ENCODE measurements at regions of chr4 and their contacts with region 1.

Region 1: DNA sequence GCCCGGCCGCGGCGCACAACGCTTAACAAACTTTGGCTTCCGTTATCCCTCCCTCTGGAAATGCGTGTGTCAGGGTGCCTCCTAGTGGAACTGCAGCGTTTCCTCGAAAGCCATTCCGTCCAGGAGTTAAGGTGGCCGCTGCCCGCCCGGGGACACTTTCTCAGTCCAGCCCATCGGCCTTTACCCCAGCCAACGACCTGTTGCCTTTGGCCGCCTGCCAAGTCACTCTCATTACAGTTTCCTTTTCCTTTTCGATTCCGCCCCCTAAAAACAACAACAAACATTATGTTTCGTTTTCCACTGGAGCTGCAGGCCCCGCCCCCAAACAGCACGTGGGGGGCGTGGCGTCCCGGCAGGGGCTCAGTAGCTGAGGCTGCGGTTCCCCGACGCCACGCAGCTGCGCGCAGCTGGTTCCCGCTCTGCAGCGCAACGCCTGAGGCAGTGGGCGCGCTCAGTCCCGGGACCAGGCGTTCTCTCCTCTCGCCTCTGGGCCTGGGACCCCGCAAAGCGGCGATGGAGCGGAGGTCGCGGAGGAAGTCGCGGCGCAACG is at the start of gene HERC5:
- DNase-seq: peak; percentile 92 to 96
- ATAC-seq: peak; percentile 91 to 98 (median 94)
- H3K4me3 ChIP-seq: peak within 1 kb of the TSS; percentile 95
- H3K4me3 Mint-ChIP-seq: peak within 1 kb of the TSS; percentile 100
- H3K27ac ChIP-seq: peak within 1 kb of the TSS; percentile 81
- H3K27ac Mint-ChIP-seq: peak within 1 kb of the TSS; percentile 95 to 97
- H3K4me1 ChIP-seq: peaks cover 11% of the 10 kb centered on the region
- H3K4me1 Mint-ChIP-seq: peaks cover 24 to 26% of the 10 kb centered on the region in 2 donors
- H3K27me3 ChIP-seq: no peaks in the 10 kb centered on the region
- H3K27me3 Mint-ChIP-seq: no peaks in the 10 kb centered on the region
- CTCF ChIP-seq: no peak
- total RNA-seq, gene HERC5: 11.0 to 19.4 (median 17.9) TPM

Region 2: DNA sequence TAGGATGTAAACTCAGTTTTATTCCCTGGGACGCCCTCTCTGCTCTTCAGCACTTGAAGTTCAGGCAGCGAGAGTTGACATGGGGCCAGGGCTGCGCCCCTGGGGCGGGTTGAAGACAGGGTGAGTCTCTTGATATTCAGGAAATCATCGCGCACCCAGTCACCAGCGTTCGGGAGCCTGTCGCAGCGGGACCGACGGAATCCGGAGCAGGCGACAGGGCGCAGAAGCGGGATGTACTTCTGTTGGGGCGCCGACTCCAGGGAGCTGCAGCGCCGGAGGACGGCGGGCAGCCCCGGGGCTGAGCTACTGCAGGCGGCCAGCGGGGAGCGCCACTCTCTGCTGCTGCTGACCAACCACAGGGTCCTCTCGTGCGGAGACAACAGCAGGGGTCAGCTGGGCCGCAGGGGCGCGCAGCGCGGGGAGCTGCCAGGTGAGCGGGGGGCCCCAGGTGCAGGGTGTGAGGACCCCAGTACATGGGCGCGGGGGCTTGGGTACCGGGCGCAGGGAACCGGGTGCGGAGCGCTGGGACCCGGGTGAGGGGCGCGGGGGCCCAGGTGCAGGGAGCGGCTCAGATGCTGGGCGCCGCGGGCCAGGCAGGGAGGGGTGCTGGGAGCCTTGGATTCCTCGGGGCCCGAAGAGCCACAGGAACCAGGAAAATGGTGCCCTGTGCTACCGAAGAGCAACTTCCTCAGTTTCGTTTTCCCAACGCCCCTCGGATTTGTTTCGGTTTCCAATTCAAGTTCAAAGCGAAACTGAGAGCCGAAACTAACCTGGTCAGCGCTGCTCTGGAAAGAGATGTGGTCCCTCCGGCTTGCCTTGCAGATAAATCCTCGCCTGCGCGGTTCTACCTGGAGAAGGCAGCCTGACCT is 77.9 kb before region 1 on chr4 and contains the start of gene HERC6:
- intact Hi-C with region 1: loop called (anchors 1 kb)
- DNase-seq: peak; percentile 64 to 92
- ATAC-seq: peak; percentile 81 to 88 (median 83)
- H3K4me3 ChIP-seq: peak within 1 kb of the TSS; percentile 87
- H3K4me3 Mint-ChIP-seq: peak within 1 kb of the TSS; percentile 96
- H3K27ac ChIP-seq: peak within 1 kb of the TSS; percentile 89
- H3K27ac Mint-ChIP-seq: peak within 1 kb of the TSS; percentile 92 to 97
- H3K4me1 ChIP-seq: peaks cover 8% of the 10 kb centered on the region
- H3K4me1 Mint-ChIP-seq: peaks cover 16 to 21% of the 10 kb centered on the region in 2 donors
- H3K27me3 ChIP-seq: no peaks in the 10 kb centered on the region
- H3K27me3 Mint-ChIP-seq: no peaks in the 10 kb centered on the region
- CTCF ChIP-seq: peak; percentile 76
- total RNA-seq, gene HERC6: 8.3 to 18.0 (median 17.5) TPM

Region 3: GRCh38 chr4:88591787-88592599 is 135.2 kb after region 1 on chr4 and contains the start of gene HERC3:
- intact Hi-C with region 1: loop called (anchors 5 kb)
- DNase-seq: peak; percentile 91 to 93
- ATAC-seq: peak; percentile 85 to 97 (median 91)
- H3K4me3 ChIP-seq: peak within 1 kb of the TSS; percentile 100
- H3K4me3 Mint-ChIP-seq: peak within 1 kb of the TSS; percentile 96
- H3K27ac ChIP-seq: peak within 1 kb of the TSS; percentile 90
- H3K27ac Mint-ChIP-seq: peak within 1 kb of the TSS; percentile 91 to 97
- H3K4me1 ChIP-seq: peaks cover 6% of the 10 kb centered on the region
- H3K4me1 Mint-ChIP-seq: peaks cover 29 to 30% of the 10 kb centered on the region in 2 donors
- H3K27me3 ChIP-seq: no peaks in the 10 kb centered on the region
- H3K27me3 Mint-ChIP-seq: no peaks in the 10 kb centered on the region
- CTCF ChIP-seq: no peak
- total RNA-seq, gene HERC3: 59.1 to 85.0 (median 61.9) TPM

Measured in natural killer cell (primary cell).